MCF 10A (cell line): ENCODE measurements at regions of chr1 and their contacts with region 1.

Region 1: GRCh38 chr1:172449585-172450534 is 6.0 kb upstream of the PIGC start:
- DNase-seq: peak; percentile 85
- H3K4me3 Mint-ChIP-seq: no peak overlapping the region
- H3K27ac Mint-ChIP-seq: peak overlapping the region; percentile 44
- H3K4me1 Mint-ChIP-seq: peaks cover 28% of the 10 kb centered on the region
- H3K27me3 Mint-ChIP-seq: no peaks in the 10 kb centered on the region
- CTCF ChIP-seq: peak; percentile 97

Region 2: GRCh38 chr1:172460887-172461315 is 11.0 kb after region 1 on chr1:
- CTCF ChIA-PET with region 1: interaction called, 31 read pairs
- POLR2A ChIA-PET with region 1: interaction called, 17 read pairs
- intact Hi-C with region 1: no loop called
- DNase-seq: no peak
- H3K4me3 Mint-ChIP-seq: no peak overlapping the region
- H3K27ac Mint-ChIP-seq: no peak overlapping the region
- H3K4me1 Mint-ChIP-seq: peaks cover 12% of the 10 kb centered on the region
- H3K27me3 Mint-ChIP-seq: no peaks in the 10 kb centered on the region
- CTCF ChIP-seq: no peak

Region 3: GRCh38 chr1:172466795-172467407 is 17.0 kb after region 1 on chr1:
- CTCF ChIA-PET with region 1: interaction called, 13 read pairs
- POLR2A ChIA-PET with region 1: interaction called, 4 read pairs
- intact Hi-C with region 1: no loop called
- DNase-seq: peak; percentile 61
- H3K4me3 Mint-ChIP-seq: no peak overlapping the region
- H3K27ac Mint-ChIP-seq: no peak overlapping the region
- H3K4me1 Mint-ChIP-seq: peaks cover 11% of the 10 kb centered on the region
- H3K27me3 Mint-ChIP-seq: no peaks in the 10 kb centered on the region
- CTCF ChIP-seq: no peak

Region 4: GRCh38 chr1:172588296-172589291 is 138.7 kb after region 1 on chr1:
- CTCF ChIA-PET with region 1: interaction called, 5 read pairs
- POLR2A ChIA-PET with region 1: no interaction called
- intact Hi-C with region 1: loop called (anchors 5 kb)
- DNase-seq: peak; percentile 84
- H3K4me3 Mint-ChIP-seq: peak overlapping the region; percentile 50
- H3K27ac Mint-ChIP-seq: peak overlapping the region; percentile 88
- H3K4me1 Mint-ChIP-seq: peaks cover 40% of the 10 kb centered on the region
- H3K27me3 Mint-ChIP-seq: no peaks in the 10 kb centered on the region
- CTCF ChIP-seq: no peak